Posterior cingulate gyrus (tissue), 11 donors: ENCODE measurements at regions of chr12 and their contacts with region 1.

Region 1: GRCh38 chr12:49974231-49974675 is 1.5 kb downstream of the AQP6 start:
- DNase-seq: peak; percentile 75 to 98 (median 86)

Region 2: GRCh38 chr12:49875115-49875720 is 99.0 kb before region 1 on chr12:
- intact Hi-C with region 1: no loop called
- DNase-seq: peak in 3 of 10 donors; percentile 61 to 71 (median 61)

Region 3: GRCh38 chr12:50016501-50017475 is 42.5 kb after region 1 on chr12:
- intact Hi-C with region 1: loop called (anchors 5 kb)
- DNase-seq: peak in 5 of 10 donors; percentile 32 to 59 (median 39)

Region 4: DNA sequence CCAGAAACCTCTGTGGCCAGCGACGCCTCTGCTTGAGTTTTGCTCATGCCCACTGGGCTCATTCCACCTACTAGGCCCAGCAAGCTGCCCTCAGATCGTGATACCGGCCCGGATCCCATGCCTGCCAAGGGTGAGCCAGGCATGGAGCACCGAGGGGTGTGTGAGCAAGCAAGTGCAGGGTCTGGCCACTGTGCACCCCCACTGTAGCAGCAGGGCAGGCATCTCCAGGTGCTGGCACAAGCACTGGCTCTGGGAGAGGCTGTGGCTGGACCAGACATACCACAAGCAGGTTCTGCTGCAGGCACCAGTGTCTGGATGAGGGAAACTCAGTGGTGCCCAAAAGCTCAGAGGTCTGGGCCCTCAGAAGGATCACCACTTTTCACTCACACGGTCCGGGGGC is 401.5 kb after region 1 on chr12:
- intact Hi-C with region 1: no loop called
- DNase-seq: no peak